Activated B cell treated with CpG ODN at 0.5 μM for 24 hours (primary cell): ENCODE measurements at regions of chr7 and their contacts with region 1.

Region 1: GRCh38 chr7:44797329-44798251 is 1.1 kb downstream of the PPIA start:
- DNase-seq: peak; percentile 70
- ATAC-seq: peak; percentile 56
- H3K4me3 Mint-ChIP-seq: peak overlapping the region; percentile 97
- H3K27ac Mint-ChIP-seq: peak overlapping the region; percentile 96
- H3K4me1 Mint-ChIP-seq: peaks cover 38% of the 10 kb centered on the region
- H3K27me3 Mint-ChIP-seq: no peaks in the 10 kb centered on the region
- CTCF ChIP-seq: no peak

Region 2: DNA sequence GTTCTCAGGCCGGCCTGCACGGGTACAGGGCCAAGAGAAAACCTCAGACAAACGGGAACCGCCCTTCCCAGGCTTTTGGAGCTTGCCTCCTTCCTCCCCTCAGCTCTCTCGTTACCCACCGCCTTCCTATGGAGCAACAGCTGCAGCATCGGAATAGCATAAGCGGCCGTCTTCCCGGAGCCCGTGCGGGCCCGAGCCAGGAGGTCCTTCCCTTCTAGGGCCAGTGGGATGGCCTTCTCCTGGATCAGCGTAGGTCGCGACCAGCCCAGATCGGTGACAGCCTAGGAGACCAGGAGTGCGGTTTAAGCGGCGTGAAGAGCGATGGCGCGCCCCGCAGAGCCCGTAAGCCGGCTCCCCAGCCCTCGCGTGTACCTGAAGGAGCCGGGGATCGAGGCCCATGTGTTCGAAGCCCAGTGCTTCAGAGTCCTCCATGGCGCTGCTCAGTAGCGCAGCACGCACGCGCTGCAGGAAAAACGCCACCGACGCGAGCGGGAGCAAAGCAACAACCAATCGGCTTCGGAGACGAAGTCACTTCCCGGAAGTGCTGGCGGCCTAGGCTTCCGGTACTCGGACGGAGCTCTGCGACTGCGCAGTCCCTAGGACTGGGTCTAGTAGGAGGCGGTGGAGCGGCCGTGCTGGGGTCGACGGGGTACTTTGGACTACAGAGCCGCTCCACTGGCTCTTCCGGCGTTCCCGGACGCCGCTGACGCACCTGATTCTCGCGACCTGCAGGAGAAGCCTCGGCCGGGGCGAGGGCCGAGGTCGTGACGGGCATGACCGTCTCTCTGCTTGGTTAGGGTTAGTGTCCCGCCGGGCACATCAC is 223.9 kb before region 1 on chr7 and contains the start of gene DDX56:
- CTCF ChIA-PET with region 1: no interaction called
- POLR2A ChIA-PET with region 1: interaction called, 11 read pairs
- intact Hi-C with region 1: no loop called
- DNase-seq: peak; percentile 82
- ATAC-seq: peak; percentile 97
- H3K4me3 Mint-ChIP-seq: peak within 1 kb of the TSS; percentile 94
- H3K27ac Mint-ChIP-seq: peak within 1 kb of the TSS; percentile 94
- H3K4me1 Mint-ChIP-seq: peaks cover 35% of the 10 kb centered on the region
- H3K27me3 Mint-ChIP-seq: no peaks in the 10 kb centered on the region
- CTCF ChIP-seq: no peak
- total RNA-seq, gene DDX56: 92.6 and 99.7 TPM in 2 replicates

Region 3: GRCh38 chr7:44606450-44607254 is 190.9 kb before region 1 on chr7 and contains the start of gene OGDH:
- CTCF ChIA-PET with region 1: interaction called, 4 read pairs
- POLR2A ChIA-PET with region 1: interaction called, 32 read pairs
- intact Hi-C with region 1: loop called (anchors 1 kb)
- DNase-seq: peak; percentile 100
- ATAC-seq: peak; percentile 94
- H3K4me3 Mint-ChIP-seq: peak within 1 kb of the TSS; percentile 98
- H3K27ac Mint-ChIP-seq: peak within 1 kb of the TSS; percentile 98
- H3K4me1 Mint-ChIP-seq: peaks cover 45% of the 10 kb centered on the region
- H3K27me3 Mint-ChIP-seq: no peaks in the 10 kb centered on the region
- CTCF ChIP-seq: no peak
- total RNA-seq, gene OGDH: 79.5 and 81.7 TPM in 2 replicates

Region 4: DNA sequence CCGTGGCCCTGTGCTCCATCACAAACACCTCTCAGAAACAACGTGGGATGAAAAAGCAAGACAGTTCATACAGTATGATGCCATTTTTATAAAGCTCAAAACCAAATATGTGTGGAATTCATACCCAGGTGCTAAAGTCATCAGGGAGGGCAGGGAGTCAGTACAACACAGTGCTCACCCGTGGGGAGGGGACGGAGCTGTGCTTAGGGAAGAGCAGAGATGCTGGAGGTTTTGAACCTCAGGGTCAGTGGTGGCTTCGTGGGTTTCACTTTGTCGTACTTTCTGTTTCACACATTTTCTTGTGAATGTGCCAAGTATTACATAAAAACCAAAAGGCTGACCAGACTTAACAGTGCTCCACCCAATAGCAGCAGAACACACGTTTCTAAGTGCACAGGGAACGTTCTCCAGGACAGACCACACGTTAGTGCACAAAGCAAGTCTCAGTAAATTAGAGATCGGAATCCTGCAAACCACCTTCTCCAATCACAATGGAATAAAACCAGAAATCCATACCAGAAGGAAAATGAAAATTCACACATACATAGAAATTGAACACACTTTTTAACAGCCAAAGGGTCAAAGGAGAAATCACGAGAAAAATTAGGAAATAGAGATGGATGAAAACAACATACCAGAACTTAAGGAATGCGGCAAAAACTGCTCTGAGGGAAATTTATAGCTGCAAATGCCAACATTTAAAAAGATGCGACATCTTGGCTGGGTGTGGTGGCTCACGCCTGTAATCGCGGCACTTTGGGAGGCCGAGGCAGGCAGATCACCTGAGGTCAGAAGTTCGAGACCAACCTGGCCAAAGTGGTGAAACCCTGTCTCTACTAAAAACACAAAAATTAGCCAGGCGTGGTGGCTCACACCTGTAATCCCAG is 27.6 kb before region 1 on chr7:
- CTCF ChIA-PET with region 1: interaction called, 3 read pairs
- POLR2A ChIA-PET with region 1: interaction called, 23 read pairs
- intact Hi-C with region 1: loop called (anchors 1 kb)
- DNase-seq: no peak
- ATAC-seq: peak; percentile 10
- H3K4me3 Mint-ChIP-seq: peak overlapping the region; percentile 58
- H3K27ac Mint-ChIP-seq: peak overlapping the region; percentile 88
- H3K4me1 Mint-ChIP-seq: peaks cover 60% of the 10 kb centered on the region
- H3K27me3 Mint-ChIP-seq: no peaks in the 10 kb centered on the region
- CTCF ChIP-seq: no peak

Region 5: DNA sequence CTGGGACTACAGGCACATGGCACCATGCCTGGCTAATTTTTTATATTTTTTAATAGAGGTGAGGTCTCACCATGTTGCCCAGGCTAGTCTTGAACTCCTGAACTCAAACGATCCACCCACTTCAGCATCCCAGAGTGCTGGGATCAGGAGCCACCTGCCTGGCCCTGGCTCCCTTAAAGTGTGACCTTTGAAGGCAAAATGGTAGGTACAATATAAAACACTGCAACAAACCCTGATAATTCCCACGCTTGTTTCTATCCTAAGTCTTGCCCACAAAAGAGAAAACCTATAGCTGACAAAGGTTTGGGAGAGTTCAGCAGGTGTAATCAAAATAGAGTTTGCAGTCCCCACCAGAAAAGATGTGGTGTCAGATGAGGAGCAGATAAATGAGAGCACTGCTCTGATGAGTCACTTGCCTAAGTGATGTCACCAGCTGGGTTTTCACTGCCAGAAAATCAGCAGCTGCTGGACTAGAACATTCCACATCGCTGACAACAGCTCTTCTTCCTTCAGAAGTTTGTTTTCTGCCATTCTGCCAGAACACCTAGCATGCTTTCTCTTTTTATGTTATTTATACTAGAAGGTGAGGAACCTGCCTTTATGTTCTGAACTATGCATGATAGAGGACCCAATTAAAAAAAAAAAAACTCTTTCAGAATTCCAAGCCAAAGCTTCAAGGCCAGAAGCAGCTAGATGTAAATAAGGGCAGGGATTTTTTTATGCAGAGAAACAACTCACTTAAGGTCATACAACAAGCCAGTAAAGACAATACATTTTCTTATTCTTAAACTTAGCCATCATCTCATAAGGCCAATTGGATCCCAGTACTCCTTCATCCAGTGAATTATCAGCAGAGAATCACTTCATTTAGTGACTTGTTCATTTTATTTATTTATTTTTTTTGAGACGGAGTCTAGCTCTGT is 69.7 kb after region 1 on chr7:
- CTCF ChIA-PET with region 1: no interaction called
- POLR2A ChIA-PET with region 1: no interaction called
- intact Hi-C with region 1: no loop called
- DNase-seq: no peak
- ATAC-seq: no peak
- H3K4me3 Mint-ChIP-seq: no peak overlapping the region
- H3K27ac Mint-ChIP-seq: no peak overlapping the region
- H3K4me1 Mint-ChIP-seq: peaks cover 2% of the 10 kb centered on the region
- H3K27me3 Mint-ChIP-seq: peaks cover 4% of the 10 kb centered on the region
- CTCF ChIP-seq: no peak

Region 6: GRCh38 chr7:44921607-44922359 is 124.2 kb after region 1 on chr7:
- CTCF ChIA-PET with region 1: interaction called, 3 read pairs
- POLR2A ChIA-PET with region 1: no interaction called
- intact Hi-C with region 1: loop called (anchors 2 kb)
- DNase-seq: peak; percentile 89
- ATAC-seq: peak; percentile 98
- H3K4me3 Mint-ChIP-seq: no peak overlapping the region
- H3K27ac Mint-ChIP-seq: no peak overlapping the region
- H3K4me1 Mint-ChIP-seq: peaks cover 3% of the 10 kb centered on the region
- H3K27me3 Mint-ChIP-seq: no peaks in the 10 kb centered on the region
- CTCF ChIP-seq: no peak